GM13977 (cell line): ENCODE measurements at regions of chr5 and their contacts with region 1.

Region 1: GRCh38 chr5:141701360-141702119 is 19.5 kb upstream of the ARAP3 start:
- DNase-seq: no peak
- CTCF ChIP-seq: no peak

Region 2: GRCh38 chr5:141805874-141806595 is 104.5 kb after region 1 on chr5:
- in situ Hi-C with region 1: loop called (anchors 10 kb)
- DNase-seq: no peak
- CTCF ChIP-seq: no peak

Region 3: GRCh38 chr5:141883184-141883891 is 181.8 kb after region 1 on chr5:
- in situ Hi-C with region 1: loop called (anchors 10 kb)
- DNase-seq: no peak
- CTCF ChIP-seq: no peak